ENCODE measurements at regions of chr17 and their contacts with region 1.

Region 1: DNA sequence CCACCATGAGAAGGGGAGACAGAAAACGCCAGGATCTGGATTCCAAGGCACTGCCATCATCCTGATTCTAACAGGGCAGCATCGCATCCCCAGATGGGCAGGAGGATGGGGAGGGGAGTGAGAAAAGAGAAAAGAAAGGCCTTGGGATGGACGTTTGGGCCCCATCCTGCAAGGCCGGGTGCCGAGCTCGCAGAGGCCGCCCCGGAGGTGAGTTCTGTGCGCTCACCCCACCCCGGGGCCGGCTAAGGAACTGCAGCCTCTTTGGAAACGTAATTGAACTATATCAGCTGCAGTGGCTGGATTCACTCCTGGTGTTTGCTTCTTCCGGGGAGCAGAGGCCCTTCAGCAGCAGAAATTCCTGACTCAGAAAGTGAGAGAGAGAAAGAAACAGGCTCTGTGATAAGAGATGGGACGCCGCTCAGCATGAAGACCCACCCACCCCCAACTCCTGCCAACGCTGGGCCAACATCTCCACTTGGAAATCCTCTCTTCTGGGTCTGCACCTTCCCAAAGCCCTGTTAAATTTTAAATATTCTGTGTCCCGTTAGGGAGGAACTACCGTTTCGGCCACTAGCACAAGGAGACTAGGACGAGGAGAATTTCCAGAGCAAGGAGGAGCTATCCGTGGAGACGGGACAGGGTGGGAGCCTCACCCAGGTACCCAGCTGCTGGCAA is 8.5 kb upstream of the SSTR2 start:
- DNase-seq: peak in 1 of 2 experiments; percentile 89
- H3K4me3 ChIP-seq: no peak overlapping the region
- H3K27ac ChIP-seq: no peak overlapping the region
- H3K4me1 ChIP-seq: peaks cover 5 to 10% (median 8%) of the 10 kb centered on the region in 4 experiments; a peak in 6 of 7 replicates
- H3K27me3 ChIP-seq: no peaks in the 10 kb centered on the region; a peak in 2 of 7 replicates
- CTCF ChIP-seq: peak; percentile 73 to 88 (median 81)
- EP300 ChIP-seq: no peak
- POLR2A ChIP-seq: no peak
- RAD21 ChIP-seq: peak; percentile 82 to 86

Region 2: DNA sequence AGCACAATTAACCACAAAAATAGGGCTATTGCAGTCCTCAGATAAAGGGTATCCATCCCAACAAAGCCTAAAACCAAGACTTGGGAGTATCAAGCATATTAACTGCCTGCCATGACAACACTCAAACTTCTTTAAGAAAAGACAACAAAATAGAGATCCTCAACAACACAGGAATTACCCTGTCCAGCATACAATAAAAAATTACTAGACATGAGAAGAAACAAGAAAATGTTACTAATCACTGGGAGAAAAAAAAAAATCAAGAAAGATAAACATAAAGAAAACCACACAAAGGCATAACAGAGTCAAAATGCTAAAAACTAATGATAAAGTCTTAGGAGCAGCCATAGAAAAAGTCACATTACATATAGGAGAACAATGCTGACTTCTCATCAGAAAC is 137.7 kb before region 1 on chr17:
- CTCF ChIA-PET with region 1: no interaction called
- POLR2A ChIA-PET with region 1: no interaction called
- DNase-seq: no peak
- H3K4me3 ChIP-seq: no peak overlapping the region
- H3K27ac ChIP-seq: no peak overlapping the region
- H3K4me1 ChIP-seq: peaks cover 0 to 5% (median 3%) of the 10 kb centered on the region in 4 experiments; a peak in 5 of 7 replicates
- H3K27me3 ChIP-seq: no peaks in the 10 kb centered on the region
- CTCF ChIP-seq: no peak
- EP300 ChIP-seq: no peak
- POLR2A ChIP-seq: no peak
- RAD21 ChIP-seq: no peak

Region 3: DNA sequence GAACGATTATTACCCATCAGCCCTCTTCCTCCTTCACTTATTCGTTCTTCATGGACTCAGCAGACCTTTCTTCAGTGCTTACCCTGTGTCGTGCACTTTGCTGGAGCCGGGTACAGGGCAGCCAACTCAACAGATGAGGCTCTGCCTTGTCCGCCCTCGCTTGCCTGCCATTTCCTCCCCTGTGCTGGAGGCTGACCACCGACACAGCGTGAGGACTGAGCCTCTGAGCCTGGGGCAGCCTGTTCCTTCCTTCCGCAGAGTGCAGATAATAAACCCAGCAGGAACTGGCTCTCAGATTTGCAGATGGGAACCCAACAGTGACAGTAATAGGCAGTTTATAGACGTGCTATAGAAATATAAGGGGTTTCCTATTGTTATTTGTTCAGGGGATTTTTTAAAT is 56.8 kb before region 1 on chr17:
- CTCF ChIA-PET with region 1: no interaction called
- POLR2A ChIA-PET with region 1: no interaction called
- DNase-seq: no peak
- H3K4me3 ChIP-seq: no peak overlapping the region
- H3K27ac ChIP-seq: no peak overlapping the region
- H3K4me1 ChIP-seq: 0 out of 7 replicates have a peak, but pooled peaks cover 0 to 2% (median 0%) of the 10 kb centered on the region in 4 experiments
- H3K27me3 ChIP-seq: no peaks in the 10 kb centered on the region
- CTCF ChIP-seq: no peak
- EP300 ChIP-seq: no peak
- POLR2A ChIP-seq: no peak
- RAD21 ChIP-seq: no peak

Region 4: GRCh38 chr17:73132085-73132492 is 24.2 kb before region 1 on chr17:
- CTCF ChIA-PET with region 1: interaction called, 14 read pairs
- POLR2A ChIA-PET with region 1: no interaction called
- DNase-seq: no peak
- H3K4me3 ChIP-seq: no peak overlapping the region
- H3K27ac ChIP-seq: no peak overlapping the region
- H3K4me1 ChIP-seq: peaks cover 0 to 4% (median 3%) of the 10 kb centered on the region in 4 experiments; a peak in 2 of 7 replicates
- H3K27me3 ChIP-seq: no peaks in the 10 kb centered on the region
- CTCF ChIP-seq: no peak
- EP300 ChIP-seq: no peak
- POLR2A ChIP-seq: no peak
- RAD21 ChIP-seq: no peak

Region 5: GRCh38 chr17:73138541-73139138 is 17.7 kb before region 1 on chr17:
- CTCF ChIA-PET with region 1: interaction called, 14 read pairs
- POLR2A ChIA-PET with region 1: no interaction called
- DNase-seq: no peak
- H3K4me3 ChIP-seq: no peak overlapping the region
- H3K27ac ChIP-seq: no peak overlapping the region
- H3K4me1 ChIP-seq: no peaks in the 10 kb centered on the region
- H3K27me3 ChIP-seq: no peaks in the 10 kb centered on the region
- CTCF ChIP-seq: no peak
- EP300 ChIP-seq: no peak
- POLR2A ChIP-seq: no peak
- RAD21 ChIP-seq: no peak

Region 6: DNA sequence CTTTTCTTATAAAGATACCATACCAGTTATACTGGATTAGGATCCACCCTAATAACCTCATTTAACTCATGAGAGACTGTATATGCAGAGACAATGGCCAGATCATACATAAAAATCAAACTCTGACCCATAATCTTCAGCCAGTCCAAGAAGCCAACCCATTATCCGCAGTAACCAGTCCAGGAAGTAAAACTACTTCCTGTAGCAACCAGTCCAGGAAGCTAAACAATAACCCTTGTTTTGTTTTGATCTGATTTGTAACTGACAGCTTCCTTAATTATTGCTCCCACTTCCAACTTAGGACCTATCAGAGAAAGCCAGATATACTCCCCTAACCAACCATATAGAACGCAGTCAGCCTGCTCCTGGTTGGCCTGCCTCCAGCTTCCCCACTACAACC is 10.7 kb before region 1 on chr17:
- CTCF ChIA-PET with region 1: interaction called, 16 read pairs
- POLR2A ChIA-PET with region 1: no interaction called
- DNase-seq: no peak
- H3K4me3 ChIP-seq: no peak overlapping the region
- H3K27ac ChIP-seq: no peak overlapping the region
- H3K4me1 ChIP-seq: no peaks in the 10 kb centered on the region
- H3K27me3 ChIP-seq: no peaks in the 10 kb centered on the region
- CTCF ChIP-seq: no peak
- EP300 ChIP-seq: no peak
- POLR2A ChIP-seq: no peak
- RAD21 ChIP-seq: no peak

Region 7: DNA sequence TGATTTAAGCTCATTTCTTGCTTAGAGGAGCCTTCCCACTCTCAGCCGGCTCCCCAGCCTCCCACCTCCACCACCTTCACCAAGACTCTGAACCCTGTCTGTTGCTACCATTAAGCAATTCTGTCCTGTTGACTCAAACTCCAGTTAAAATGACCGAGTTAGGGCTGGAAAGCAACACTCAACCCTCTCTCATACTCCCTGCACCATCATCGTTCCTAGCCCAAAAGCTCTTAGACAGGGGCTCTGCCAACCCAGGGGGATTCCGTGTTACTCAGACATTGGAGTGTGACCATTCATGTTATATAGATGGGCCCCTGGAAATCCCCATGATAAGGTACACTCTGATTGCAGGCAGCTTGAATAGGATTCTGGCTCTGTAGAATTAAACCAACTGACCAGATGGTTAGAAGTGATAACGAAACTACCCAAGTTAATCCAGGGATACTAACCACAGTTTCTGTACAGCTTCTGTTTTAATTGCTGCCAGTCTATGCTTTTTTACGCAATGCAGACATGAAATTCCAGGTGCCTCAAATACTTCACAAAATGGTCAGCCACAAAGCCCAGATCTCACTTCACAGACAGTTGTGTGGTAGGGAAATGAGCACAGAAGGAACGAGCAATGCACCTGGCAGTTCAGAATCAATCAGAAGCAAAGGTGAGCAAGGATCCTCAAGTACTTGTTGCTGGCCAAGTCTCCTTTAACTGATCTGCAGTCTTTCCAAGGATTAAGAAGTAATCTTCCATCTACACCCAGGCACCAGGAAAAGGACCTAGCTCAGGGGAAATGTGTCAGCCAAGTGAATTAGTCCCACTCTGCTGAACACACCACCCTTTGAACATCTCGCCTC is 10.7 kb after region 1 on chr17:
- CTCF ChIA-PET with region 1: interaction called, 27 read pairs
- POLR2A ChIA-PET with region 1: interaction called, 11 read pairs
- DNase-seq: no peak
- H3K4me3 ChIP-seq: peak overlapping the region in 1 of 4 experiments; percentile 71; a peak in 2 of 8 replicates
- H3K27ac ChIP-seq: no peak overlapping the region
- H3K4me1 ChIP-seq: peaks cover 4 to 20% (median 10%) of the 10 kb centered on the region in 4 experiments
- H3K27me3 ChIP-seq: peaks cover 12 to 48% (median 46%) of the 10 kb centered on the region in 4 experiments
- CTCF ChIP-seq: no peak
- EP300 ChIP-seq: no peak
- POLR2A ChIP-seq: no peak
- RAD21 ChIP-seq: no peak